PC-9 (cell line): ENCODE measurements at regions of chr14 and their contacts with region 1.

Region 1: DNA sequence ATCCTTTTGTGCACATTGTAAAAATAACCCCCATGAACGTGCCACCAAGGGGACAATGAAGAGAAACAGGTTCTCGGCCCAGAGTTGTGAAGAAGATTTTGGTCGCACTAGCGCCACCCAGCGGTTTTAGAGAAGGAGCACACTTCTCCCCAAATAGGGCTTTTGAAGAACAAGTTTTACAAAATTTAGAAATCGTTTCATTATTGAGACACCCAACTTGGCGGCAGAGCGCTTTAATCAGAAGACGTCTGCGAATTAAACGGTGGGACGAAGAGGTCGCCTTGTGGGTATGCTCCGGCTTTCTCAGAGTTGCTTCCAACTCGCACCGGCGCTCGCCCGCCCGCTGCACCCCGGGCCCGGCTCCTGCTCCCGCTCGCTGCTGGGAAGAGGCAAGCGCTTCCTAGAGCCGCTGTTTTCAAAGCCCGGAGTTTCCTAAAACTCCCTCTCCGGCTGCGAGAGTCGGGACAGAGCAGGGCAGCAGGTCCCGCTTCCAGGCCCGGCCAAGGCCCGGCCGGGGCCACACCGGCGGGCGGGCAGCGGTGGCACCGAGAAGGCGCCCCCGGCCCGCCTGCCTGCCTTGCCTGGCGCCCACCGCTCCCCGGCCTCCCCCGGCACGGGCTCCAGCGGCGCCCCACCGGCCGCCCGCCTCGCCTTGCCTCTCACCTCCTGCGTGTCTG is 673 bp downstream of the FOXA1 start:
- DNase-seq: peak; percentile 68 to 71
- H3K4me3 ChIP-seq: peak overlapping the region; percentile 94
- H3K27ac ChIP-seq: peak overlapping the region; percentile 99
- H3K4me1 ChIP-seq: no peaks in the 10 kb centered on the region
- H3K27me3 ChIP-seq: no peaks in the 10 kb centered on the region
- CTCF ChIP-seq: peak; percentile 80

Region 2: GRCh38 chr14:36975835-36976234 is 618.5 kb before region 1 on chr14:
- CTCF ChIA-PET with region 1: no interaction called
- POLR2A ChIA-PET with region 1: no interaction called
- intact Hi-C with region 1: loop called (anchors 10 kb)
- DNase-seq: no peak
- H3K4me3 ChIP-seq: no peak overlapping the region
- H3K27ac ChIP-seq: peak overlapping the region; percentile 90
- H3K4me1 ChIP-seq: peaks cover 40% of the 10 kb centered on the region
- H3K27me3 ChIP-seq: no peaks in the 10 kb centered on the region
- CTCF ChIP-seq: no peak

Region 3: DNA sequence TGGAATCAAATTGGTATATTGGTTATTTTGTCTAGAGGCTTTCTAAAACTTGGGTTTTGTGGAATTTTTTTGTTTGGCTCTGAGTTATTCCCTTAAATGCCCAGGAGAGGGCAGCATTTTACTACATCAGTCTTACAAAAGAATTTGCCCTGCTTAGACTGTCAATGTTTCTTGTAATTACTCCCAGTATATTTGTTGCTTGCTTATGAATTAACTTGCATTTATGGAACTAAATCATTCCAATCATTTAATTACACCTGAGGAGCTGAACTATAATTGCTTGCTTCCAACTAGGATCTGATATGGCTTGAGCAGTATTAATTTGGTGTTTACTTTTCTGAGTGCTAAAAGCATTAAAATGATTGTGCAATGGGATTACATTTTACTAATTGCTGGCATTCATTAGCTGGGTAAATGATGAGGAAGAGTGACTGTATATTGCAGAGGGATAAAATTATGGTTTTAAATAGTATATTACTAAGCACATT is 347.9 kb before region 1 on chr14:
- CTCF ChIA-PET with region 1: no interaction called
- POLR2A ChIA-PET with region 1: no interaction called
- intact Hi-C with region 1: loop called (anchors 1 kb)
- DNase-seq: peak in 1 of 2 experiments; percentile 59
- H3K4me3 ChIP-seq: no peak overlapping the region
- H3K27ac ChIP-seq: no peak overlapping the region
- H3K4me1 ChIP-seq: peaks cover 5% of the 10 kb centered on the region
- H3K27me3 ChIP-seq: no peaks in the 10 kb centered on the region
- CTCF ChIP-seq: peak; percentile 85

Region 4: DNA sequence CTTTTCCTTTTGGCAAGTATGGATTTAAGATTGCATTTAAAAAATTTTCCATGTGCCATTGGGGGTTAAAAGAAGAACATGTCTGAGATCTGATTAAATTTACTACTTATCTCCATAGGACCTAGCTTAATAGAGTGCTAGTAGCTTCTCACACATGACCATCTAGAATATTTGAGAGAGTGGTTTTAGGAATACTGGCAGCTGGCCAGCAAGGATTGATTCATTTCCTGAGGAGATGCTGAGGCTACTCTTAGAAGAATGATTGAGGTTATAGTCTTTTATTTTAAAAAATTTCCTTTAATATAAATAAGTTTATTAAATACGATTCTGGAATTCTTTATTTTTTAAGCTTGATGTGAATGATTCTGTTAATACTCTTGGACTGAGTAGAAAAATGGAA is 340.5 kb before region 1 on chr14:
- CTCF ChIA-PET with region 1: no interaction called
- POLR2A ChIA-PET with region 1: no interaction called
- intact Hi-C with region 1: loop called (anchors 2 kb)
- DNase-seq: peak in 1 of 2 experiments; percentile 9
- H3K4me3 ChIP-seq: no peak overlapping the region
- H3K27ac ChIP-seq: no peak overlapping the region
- H3K4me1 ChIP-seq: no peaks in the 10 kb centered on the region
- H3K27me3 ChIP-seq: no peaks in the 10 kb centered on the region
- CTCF ChIP-seq: no peak

Region 5: GRCh38 chr14:37501877-37502276 is 92.5 kb before region 1 on chr14:
- CTCF ChIA-PET with region 1: no interaction called
- POLR2A ChIA-PET with region 1: no interaction called
- intact Hi-C with region 1: no loop called
- DNase-seq: no peak
- H3K4me3 ChIP-seq: no peak overlapping the region
- H3K27ac ChIP-seq: no peak overlapping the region
- H3K4me1 ChIP-seq: no peaks in the 10 kb centered on the region
- H3K27me3 ChIP-seq: no peaks in the 10 kb centered on the region
- CTCF ChIP-seq: no peak

Region 6: DNA sequence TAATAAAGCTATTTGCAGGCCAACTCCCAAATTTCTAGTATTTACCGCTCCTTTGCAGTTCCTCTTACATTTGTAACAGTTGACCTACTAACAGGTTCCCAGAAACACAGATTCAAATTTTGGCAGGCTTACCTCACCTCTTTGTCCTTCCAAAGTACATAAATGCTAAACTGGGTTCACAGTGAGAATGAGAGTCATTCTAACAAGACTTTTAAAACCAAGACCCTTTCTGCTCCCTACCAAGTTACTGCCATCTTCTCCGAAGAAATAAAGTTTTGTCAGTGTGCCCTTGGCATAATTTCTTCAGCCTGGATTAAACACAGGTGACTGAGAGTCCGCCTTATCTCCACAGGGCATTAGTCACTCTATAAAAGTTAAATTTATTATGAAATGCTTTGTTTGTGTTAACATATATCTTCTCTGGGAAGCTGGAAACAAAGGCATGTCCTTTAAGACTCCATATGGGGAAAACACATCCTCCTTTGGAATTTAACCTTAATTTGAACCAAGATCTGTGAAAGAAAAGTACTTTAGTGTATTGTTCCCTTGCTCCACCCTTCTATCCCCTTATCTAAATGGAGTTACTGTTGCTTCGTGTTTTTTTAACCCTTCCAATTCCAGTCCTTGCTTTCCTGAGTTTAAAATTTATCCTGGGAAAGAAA is 27.4 kb before region 1 on chr14:
- CTCF ChIA-PET with region 1: no interaction called
- POLR2A ChIA-PET with region 1: interaction called, 23 read pairs
- intact Hi-C with region 1: loop called (anchors 2 kb)
- DNase-seq: peak in 1 of 2 experiments; percentile 96
- H3K4me3 ChIP-seq: peak overlapping the region; percentile 59
- H3K27ac ChIP-seq: peak overlapping the region; percentile 92
- H3K4me1 ChIP-seq: peaks cover 40% of the 10 kb centered on the region
- H3K27me3 ChIP-seq: no peaks in the 10 kb centered on the region
- CTCF ChIP-seq: no peak

Region 7: GRCh38 chr14:37697489-37698121 is 103.2 kb after region 1 on chr14:
- CTCF ChIA-PET with region 1: no interaction called
- POLR2A ChIA-PET with region 1: no interaction called
- intact Hi-C with region 1: loop called (anchors 5 kb)
- DNase-seq: peak in 1 of 2 experiments; percentile 73
- H3K4me3 ChIP-seq: no peak overlapping the region
- H3K27ac ChIP-seq: no peak overlapping the region; the same call in 1 of the 2 replicates
- H3K4me1 ChIP-seq: peaks cover 10% of the 10 kb centered on the region
- H3K27me3 ChIP-seq: no peaks in the 10 kb centered on the region
- CTCF ChIP-seq: no peak

Region 8: GRCh38 chr14:37874429-37875191 is 280.2 kb after region 1 on chr14:
- CTCF ChIA-PET with region 1: no interaction called
- POLR2A ChIA-PET with region 1: no interaction called
- intact Hi-C with region 1: loop called (anchors 1 kb)
- DNase-seq: peak; percentile 51 to 76
- H3K4me3 ChIP-seq: no peak overlapping the region
- H3K27ac ChIP-seq: no peak overlapping the region
- H3K4me1 ChIP-seq: no peaks in the 10 kb centered on the region
- H3K27me3 ChIP-seq: no peaks in the 10 kb centered on the region
- CTCF ChIP-seq: peak; percentile 85